Posterior cingulate gyrus (tissue), 11 donors: ENCODE measurements at regions of chr16 and their contacts with region 1.

Region 1: DNA sequence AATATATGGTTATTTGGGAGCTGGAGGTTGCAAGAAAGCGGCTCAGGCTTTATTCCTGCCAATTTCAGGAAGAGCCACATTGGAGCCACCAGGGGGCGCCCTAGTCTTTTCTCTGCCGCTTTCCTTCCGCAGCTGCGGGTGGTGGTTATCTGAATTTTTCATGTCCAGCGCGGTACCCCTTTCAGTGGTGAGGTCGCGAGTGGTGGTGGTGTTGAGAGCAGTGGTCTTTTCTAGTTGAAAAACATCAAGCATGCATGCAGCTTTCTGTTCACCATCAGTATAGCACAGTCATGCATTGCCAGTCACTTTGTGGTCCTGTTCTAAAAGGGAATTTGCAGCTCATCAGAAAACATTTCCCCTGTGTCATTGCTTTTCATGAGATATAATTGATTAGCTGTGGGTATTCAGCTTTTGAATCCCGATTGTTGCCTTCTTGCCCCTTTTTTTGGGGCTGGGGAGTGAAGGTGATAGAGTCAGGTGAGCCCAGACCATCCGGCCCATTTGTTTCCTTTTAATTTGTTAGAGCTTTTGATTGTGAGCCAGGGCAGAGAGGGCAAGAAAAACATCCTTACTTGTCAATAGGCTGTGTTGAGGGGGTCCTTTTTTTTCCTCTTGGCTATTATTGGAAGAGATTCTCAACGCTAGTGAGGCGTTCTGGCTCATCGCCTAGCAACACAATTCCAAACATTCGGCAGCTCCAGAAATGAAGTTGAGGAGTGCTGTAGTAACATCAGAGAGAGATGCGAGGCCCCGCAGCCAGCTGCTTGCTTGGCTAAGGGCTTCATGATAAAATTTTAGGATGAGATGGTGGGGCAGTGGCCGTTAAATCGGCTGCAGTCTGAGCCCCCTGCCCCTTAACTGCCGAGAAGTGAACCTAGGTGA is 119.0 kb downstream of the SNX29 start:
- DNase-seq: peak; percentile 52 to 95 (median 78)

Region 2: GRCh38 chr16:11379420-11379819 is 716.1 kb before region 1 on chr16:
- intact Hi-C with region 1: no loop called
- DNase-seq: peak in 1 of 10 donors; percentile 29

Region 3: GRCh38 chr16:12228602-12229499 is 133.3 kb after region 1 on chr16:
- intact Hi-C with region 1: loop called (anchors 10 kb)
- DNase-seq: peak; percentile 50 to 95 (median 73)

Region 4: DNA sequence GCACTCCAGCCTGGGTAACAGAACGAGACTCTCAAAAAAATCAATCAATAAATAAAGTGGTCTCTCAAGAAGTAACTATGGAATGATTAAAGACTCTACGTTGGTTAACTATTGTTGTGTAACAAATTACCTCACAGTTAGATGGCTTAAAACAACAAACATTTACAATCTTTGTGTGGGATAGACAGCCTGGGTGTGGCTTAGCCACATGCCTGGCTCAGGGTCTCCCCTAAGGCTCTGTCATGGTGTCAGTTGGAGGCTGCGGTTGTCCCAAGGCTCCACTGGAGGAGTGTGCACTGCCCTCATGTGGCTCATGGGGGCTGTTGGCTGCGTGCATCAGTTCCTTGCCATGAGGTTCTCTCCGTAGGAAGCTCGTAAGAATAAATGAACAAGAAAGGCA is 175.5 kb after region 1 on chr16:
- intact Hi-C with region 1: loop called (anchors 1 kb)
- DNase-seq: peak in 7 of 10 donors; percentile 36 to 92 (median 49)

Region 5: GRCh38 chr16:12436201-12436657 is 340.7 kb after region 1 on chr16:
- intact Hi-C with region 1: loop called (anchors 10 kb)
- DNase-seq: peak in 6 of 10 donors; percentile 21 to 81 (median 53)